Right cardiac atrium (tissue), 5 donors: ENCODE measurements at regions of chr1 and their contacts with region 1.

Region 1: GRCh38 chr1:231421993-231422764 is at the start of gene EGLN1:
- DNase-seq: peak; percentile 87 to 95 (median 94)
- ATAC-seq: peak; percentile 93 to 95
- H3K4me3 ChIP-seq: peak within 1 kb of the TSS; percentile 93
- H3K27ac ChIP-seq: peak within 1 kb of the TSS; percentile 99
- H3K4me1 ChIP-seq: no peaks in the 10 kb centered on the region
- H3K27me3 ChIP-seq: no peaks in the 10 kb centered on the region
- total RNA-seq, gene EGLN1: 54.1 to 79.9 (median 71.0) TPM

Region 2: DNA sequence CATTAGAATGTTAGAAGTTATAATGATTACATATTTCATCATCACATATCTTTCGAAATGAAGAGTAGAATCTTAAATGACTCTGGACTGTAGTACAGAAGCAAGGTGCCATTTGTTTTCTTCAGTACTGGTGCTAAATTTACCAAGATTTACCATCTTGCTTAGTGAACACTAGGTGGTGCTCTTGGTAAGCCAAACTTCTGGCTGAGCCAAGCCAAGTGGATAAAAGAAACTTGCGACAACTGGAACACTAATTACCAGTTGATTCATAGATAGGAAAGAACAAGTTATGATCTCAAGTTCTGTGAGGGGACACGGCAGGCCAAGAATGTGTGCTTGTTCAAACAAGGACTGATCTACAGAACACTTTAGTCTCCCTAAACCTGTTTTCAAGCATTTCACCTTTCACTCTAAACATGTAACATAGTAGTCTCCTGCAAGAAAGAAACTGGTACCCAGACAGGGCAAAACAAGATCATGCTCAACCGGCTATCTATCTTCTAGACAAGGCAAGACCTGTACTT is 64.3 kb before region 1 on chr1:
- intact Hi-C with region 1: loop called in 3 of 4 experiments (anchors 5 to 10 kb)
- DNase-seq: peak in 2 of 3 donors; percentile 7 to 31
- ATAC-seq: peak; percentile 74 to 78
- H3K4me3 ChIP-seq: no peak overlapping the region
- H3K27ac ChIP-seq: peak overlapping the region; percentile 35
- H3K4me1 ChIP-seq: no peaks in the 10 kb centered on the region
- H3K27me3 ChIP-seq: no peaks in the 10 kb centered on the region

Region 3: DNA sequence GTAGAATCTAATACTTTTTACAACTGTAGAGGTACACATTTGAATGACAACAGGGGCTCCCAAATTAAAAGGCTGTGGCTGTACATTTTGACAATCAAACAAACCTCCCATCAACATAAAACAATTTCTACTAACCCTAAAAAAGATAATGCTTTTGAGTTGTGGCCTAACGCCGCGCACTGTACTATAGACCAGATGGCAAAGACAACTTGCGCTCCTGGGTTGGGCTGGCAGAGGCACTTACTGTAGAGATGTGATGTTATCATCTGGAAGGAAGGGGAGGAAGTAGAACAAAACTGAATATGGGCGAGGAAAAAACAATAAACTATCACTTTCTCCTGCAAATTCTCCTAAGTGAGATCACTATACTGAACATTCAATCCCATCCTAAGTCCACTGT is 58.0 kb before region 1 on chr1:
- intact Hi-C with region 1: loop called in 3 of 4 experiments (anchors 5 to 10 kb)
- DNase-seq: peak in 1 of 3 donors; percentile 21
- ATAC-seq: no peak
- H3K4me3 ChIP-seq: no peak overlapping the region
- H3K27ac ChIP-seq: no peak overlapping the region
- H3K4me1 ChIP-seq: no peaks in the 10 kb centered on the region
- H3K27me3 ChIP-seq: no peaks in the 10 kb centered on the region

Region 4: DNA sequence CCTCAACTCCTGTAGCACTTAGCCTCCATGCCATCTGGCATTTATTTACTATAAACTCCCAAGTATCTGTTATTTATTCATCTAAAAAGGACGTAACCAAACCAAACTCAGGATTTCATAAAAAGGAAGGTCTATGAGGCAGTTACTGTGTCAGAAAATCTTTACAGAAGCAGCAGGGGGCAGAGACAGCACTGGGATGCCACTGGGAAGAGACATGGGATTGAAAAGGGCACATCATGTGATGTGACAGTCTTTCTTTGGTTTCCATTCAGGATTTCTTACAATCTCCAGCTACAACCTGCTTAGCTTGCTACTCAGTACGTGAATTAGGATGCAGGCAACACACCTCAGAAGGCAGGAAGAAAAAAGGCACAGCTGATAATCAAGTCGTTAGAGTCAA is 52.9 kb before region 1 on chr1:
- intact Hi-C with region 1: loop called in 2 of 4 experiments (anchors 5 to 10 kb)
- DNase-seq: no peak
- ATAC-seq: peak in 1 of 2 donors; percentile 35
- H3K4me3 ChIP-seq: no peak overlapping the region
- H3K27ac ChIP-seq: no peak overlapping the region
- H3K4me1 ChIP-seq: no peaks in the 10 kb centered on the region
- H3K27me3 ChIP-seq: no peaks in the 10 kb centered on the region

Region 5: DNA sequence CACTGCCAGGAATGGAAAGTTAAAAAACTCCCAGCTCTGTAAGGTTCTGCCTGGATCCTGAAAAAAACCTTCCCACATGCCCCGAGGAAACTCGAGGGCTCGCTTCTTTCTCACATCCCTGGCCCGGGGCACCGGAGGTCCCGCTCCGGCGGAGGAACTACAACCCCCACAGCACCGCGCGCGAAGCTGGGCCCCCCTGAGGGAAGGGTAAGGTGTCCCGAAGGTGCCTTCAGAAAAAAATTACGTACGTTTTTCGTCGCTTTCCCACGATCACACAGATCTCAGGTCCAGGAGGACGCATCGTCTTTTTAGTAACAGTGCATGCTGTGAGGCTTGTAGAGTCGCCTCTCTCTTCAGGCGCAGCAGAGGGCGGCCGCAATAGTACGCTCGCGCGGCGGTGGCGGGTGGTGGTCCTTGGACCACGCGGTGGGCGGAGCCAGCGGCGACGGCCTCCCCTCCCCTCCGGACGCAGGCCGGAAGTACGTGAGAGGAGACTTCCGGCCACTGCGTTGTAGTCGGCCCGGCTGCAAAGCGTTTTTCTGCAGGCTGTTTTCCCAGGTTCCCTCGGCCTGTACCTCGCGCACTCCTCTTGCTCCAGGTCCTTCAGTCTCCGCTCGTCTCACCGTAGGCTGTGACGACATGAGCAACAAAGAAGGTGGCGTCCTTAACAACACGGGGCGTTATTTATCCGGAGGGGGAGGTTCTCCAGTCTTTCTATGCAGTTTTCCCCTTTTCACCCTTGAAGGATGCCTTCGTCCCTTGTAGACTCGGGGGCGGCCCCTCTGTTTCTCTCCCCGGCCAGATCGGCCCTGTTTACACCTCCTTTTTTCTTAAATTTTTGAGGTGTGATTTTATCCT is 106.2 kb after region 1 on chr1 and contains the start of gene TSNAX:
- intact Hi-C with region 1: loop called in 2 of 4 experiments (anchors 5 kb)
- DNase-seq: peak; percentile 93 to 97 (median 97)
- ATAC-seq: peak; percentile 99
- H3K4me3 ChIP-seq: peak within 1 kb of the TSS; percentile 95
- H3K27ac ChIP-seq: peak within 1 kb of the TSS; percentile 94
- H3K4me1 ChIP-seq: peaks cover 3% of the 10 kb centered on the region
- H3K27me3 ChIP-seq: no peaks in the 10 kb centered on the region
- total RNA-seq, gene TSNAX: 31.9 to 39.9 (median 36.5) TPM